Posterior vena cava (tissue), 2 donors: ENCODE measurements at regions of chr16 and their contacts with region 1.

Region 1: DNA sequence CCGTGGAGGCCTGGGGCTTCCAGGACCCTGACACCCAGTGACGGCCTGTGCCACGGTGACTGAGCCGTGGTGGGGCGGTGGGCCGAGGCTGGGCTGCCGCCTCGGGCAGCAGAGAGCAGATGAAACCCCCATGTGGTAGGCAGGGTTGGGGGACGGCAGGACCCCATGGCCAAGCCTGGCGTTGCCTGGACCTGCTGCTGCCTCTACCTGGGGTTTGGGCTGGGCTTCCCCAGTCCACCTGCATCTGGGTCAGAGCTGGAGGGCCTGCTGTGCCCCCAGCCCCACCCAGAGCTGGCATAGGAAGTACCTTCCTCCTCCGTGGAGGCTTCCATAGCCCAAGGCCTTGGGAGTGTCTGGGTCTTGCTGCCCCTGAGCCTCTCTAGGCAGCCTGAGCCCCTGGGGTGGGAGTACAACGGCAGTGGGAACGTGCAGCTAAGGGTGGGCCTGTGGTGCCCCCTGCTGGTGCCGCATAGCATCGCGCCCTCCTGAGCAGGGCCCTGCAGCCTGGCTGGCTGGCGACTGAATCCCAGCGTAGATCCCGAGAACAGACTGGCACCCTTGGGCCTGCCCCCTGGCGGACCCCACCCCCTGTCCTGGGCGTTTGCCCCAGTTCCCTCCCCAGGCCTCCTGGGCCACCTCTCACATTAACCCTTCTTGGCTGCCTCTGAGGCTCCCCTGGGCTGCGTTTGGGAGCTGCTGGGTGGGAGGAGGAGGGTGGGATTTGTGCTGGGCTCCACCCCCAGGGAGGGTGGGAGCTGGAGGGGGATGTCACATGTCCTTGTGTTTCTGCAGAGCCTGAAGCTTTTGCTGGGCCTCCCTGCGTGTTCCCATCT is 12.6 kb upstream of the ATP6V0C start:
- DNase-seq: peak; percentile 96

Region 2: DNA sequence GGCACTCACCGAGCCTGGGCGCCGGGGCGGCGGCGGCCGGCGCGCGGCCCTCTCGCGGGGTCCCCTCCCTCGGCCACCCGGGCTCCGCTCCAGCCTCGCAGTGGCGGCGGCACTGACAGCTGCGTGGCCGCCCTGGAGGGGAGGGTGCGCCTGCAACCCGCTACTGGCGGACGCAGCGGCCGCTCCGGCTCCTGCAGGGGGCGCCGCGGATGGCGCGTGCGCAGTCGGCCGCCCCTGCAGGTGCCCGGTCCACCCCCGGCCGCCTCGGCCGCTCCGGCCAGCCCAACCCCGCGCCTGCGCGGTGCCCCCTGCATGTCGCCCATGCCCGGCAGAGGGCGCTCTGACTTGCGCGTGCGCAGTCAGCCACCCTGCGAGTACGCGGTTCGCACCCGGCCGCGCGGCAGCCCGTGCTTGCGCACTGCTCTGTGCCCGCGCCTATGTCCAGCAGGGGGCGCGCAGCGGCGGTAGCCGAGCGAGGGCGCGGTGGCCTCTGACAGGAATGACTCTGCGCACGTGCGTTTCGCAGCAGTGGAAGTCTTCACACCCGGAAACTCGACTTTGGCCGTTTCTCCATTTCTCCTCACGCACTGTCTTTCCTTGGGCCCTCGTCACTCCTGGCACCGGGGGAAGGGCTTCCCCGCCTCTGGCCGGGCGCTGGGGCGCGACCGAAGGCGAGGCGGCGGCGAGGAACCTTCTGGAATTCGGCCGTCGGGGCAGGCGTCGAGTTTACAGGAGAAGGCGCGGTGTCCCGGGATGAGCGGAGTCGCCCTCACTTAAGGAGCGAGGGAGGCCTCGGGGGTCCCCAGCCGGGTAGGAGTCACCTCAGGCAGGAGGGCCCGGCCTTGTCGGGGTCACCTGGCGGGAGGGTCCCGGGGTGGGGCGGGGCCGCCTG is 160.3 kb before region 1 on chr16 and contains the start of gene ABCA3:
- intact Hi-C with region 1: loop called (anchors 5 kb)
- DNase-seq: peak; percentile 98
- total RNA-seq, gene ABCA3: 9.6 to 16.6 TPM

Region 3: GRCh38 chr16:2429771-2430663 is 71.1 kb before region 1 on chr16:
- intact Hi-C with region 1: loop called in 1 of 2 experiments (anchors 10 kb)
- DNase-seq: peak; percentile 80

Region 4: DNA sequence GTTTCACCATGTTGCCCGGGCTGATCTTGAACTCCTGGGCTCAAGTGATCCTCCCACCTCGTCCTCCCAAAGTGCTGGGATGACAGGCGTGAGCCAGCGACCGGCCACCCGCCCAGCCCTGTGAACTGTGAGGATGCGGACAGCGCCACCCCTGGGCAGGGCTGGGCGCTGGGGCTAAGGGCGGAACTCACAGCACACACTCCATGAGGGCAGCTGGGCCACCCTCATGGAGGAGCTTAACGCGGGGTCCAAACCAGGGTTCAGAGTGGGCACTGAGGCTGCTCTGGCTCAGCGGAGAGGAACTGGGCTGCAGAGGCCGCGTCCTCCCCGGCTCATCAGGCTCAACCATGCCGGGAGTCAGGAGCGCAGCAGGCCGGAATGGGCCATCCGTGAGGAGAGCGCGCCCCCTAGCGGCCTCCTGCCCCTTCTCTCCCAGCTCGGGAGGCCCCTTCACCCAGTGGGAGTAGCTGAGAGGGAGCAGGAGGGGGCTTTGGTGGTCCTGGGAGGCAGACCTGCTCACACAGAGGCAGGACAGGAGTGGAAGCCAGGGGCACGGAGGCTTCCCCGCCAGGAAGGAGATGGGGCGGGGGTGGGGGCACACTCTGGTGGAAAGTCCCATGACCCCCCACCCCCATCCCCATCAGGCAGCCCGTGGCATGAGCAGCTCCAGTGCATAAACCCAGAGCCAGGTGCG is 1901.5 kb after region 1 on chr16:
- intact Hi-C with region 1: no loop called
- DNase-seq: peak; percentile 95